GM23248 (cell line): ENCODE measurements at regions of chr15 and their contacts with region 1.

Region 1: GRCh38 chr15:85899927-85900326 is 105.2 kb upstream of the KLHL25 start:
- DNase-seq: no peak
- H3K4me3 ChIP-seq: no peak overlapping the region
- H3K27ac ChIP-seq: no peak overlapping the region
- H3K4me1 ChIP-seq: no peaks in the 10 kb centered on the region
- H3K27me3 ChIP-seq: no peaks in the 10 kb centered on the region

Region 2: DNA sequence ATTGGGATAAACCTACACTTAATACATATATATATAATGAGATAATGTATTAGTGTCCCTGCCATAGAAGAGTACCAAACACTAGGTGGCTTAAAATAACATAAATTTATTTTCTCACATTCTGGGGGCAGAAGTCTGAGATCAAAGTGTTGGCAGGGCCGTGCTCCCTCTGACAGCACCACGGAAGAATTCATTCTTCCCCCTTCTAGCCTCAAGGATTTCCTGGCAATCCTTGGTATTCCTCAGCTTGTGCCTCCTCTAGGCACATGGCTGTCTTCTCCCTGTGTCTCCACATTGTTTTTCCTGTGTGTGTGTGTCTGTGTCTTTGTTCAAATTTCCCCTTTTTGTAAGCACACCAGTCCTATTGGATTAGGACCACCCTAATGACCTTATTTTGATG is 64.5 kb after region 1 on chr15:
- in situ Hi-C with region 1: loop called (anchors 10 kb)
- DNase-seq: no peak
- H3K4me3 ChIP-seq: no peak overlapping the region
- H3K27ac ChIP-seq: no peak overlapping the region
- H3K4me1 ChIP-seq: no peaks in the 10 kb centered on the region
- H3K27me3 ChIP-seq: no peaks in the 10 kb centered on the region

Region 3: GRCh38 chr15:86413191-86413590 is 513.3 kb after region 1 on chr15:
- in situ Hi-C with region 1: no loop called
- DNase-seq: no peak
- H3K4me3 ChIP-seq: no peak overlapping the region
- H3K27ac ChIP-seq: no peak overlapping the region
- H3K4me1 ChIP-seq: no peaks in the 10 kb centered on the region
- H3K27me3 ChIP-seq: no peaks in the 10 kb centered on the region